ENCODE measurements at regions of chrX and their contacts with region 1.

Region 1: DNA sequence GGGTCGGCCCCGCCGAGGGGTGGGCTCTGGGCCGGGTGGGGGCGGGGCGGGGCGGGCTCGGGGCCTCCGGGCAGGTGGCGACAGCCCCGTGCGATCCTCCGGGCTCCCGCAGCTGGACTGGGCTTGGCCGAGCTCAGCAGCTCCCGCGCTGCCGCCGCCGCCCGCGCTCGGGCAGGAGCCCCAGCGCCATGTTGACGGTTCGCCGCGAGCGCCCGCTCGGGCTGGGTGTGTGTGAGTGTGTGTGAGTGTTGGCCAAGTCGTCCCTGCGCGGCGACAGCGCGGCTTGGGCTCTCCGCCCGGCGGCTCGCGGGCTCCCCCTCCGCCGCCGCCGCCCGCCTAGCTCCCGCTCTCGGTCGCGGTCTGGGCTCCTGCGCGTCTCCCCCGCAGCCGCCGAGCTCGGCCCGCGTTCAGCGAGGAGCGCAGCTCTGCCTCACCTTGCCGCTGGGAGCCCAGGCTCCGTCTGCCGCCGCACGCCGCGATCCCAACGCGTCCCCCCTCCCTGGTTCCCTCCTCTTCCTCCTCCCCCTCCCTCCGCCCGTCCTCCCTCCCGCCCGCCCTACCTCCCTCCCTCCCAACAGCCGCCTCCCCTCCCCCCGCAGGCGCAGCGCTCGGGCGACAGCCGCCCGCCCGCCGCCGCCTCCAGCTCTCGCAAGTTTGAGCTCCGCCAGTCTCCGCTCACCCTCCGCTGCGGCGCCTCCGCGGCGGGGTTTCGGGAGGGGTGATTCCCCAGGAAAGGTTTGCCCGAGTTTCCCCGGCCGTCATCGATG is at the start of gene BCOR:
- DNase-seq: peak; percentile 58 to 89 (median 72)
- ATAC-seq: peak; percentile 27
- H3K4me3 ChIP-seq: peak within 1 kb of the TSS; percentile 70
- H3K27ac ChIP-seq: peak within 1 kb of the TSS; percentile 92
- H3K4me1 ChIP-seq: peaks cover 39 to 71% of the 10 kb centered on the region in 2 experiments
- H3K27me3 ChIP-seq: no peaks in the 10 kb centered on the region
- CTCF ChIP-seq: no peak
- EP300 ChIP-seq: no peak
- POLR2A ChIP-seq: peak; percentile 73
- RAD21 ChIP-seq: no peak; a peak in 1 of 4 replicates
- polyA plus RNA-seq, gene BCOR: 32.0 to 37.4 TPM

Region 2: DNA sequence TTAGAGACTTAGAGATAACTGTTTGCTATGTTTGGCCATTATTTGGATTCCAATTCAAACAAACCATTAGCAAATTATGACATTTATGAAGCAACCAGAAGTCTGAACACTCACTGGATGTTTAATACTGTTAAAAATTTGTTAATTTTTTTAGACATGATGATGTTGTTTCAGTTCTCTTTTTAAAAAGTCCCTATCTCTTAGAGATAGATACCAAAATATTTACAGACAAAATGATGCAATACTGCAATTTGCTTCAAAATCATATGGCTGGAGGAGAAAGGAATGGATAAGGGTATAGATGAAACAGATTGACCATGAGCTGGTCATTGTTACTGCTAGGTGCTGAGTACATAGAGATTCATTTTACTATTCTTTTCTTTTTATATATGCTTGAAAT is 534.5 kb before region 1 on chrX:
- CTCF ChIA-PET with region 1: no interaction called
- POLR2A ChIA-PET with region 1: no interaction called
- in situ Hi-C with region 1: no loop called
- intact Hi-C with region 1: no loop called
- DNase-seq: no peak
- ATAC-seq: no peak
- H3K4me3 ChIP-seq: no peak overlapping the region
- H3K27ac ChIP-seq: no peak overlapping the region
- H3K4me1 ChIP-seq: no peaks in the 10 kb centered on the region
- H3K27me3 ChIP-seq: no peaks in the 10 kb centered on the region; a peak in 1 of 5 replicates
- CTCF ChIP-seq: no peak
- EP300 ChIP-seq: no peak
- POLR2A ChIP-seq: no peak
- RAD21 ChIP-seq: no peak

Region 3: GRCh38 chrX:39759526-39760184 is 338.0 kb before region 1 on chrX:
- CTCF ChIA-PET with region 1: no interaction called
- POLR2A ChIA-PET with region 1: no interaction called
- in situ Hi-C with region 1: no loop called
- intact Hi-C with region 1: no loop called
- DNase-seq: no peak
- ATAC-seq: no peak
- H3K4me3 ChIP-seq: no peak overlapping the region
- H3K27ac ChIP-seq: no peak overlapping the region
- H3K4me1 ChIP-seq: peaks cover 5 to 11% of the 10 kb centered on the region in 2 experiments; a peak in 4 of 5 replicates
- H3K27me3 ChIP-seq: no peaks in the 10 kb centered on the region; a peak in 1 of 5 replicates
- CTCF ChIP-seq: no peak
- EP300 ChIP-seq: no peak
- POLR2A ChIP-seq: no peak
- RAD21 ChIP-seq: no peak

Region 4: GRCh38 chrX:40013266-40014195 is 84.1 kb before region 1 on chrX:
- CTCF ChIA-PET with region 1: no interaction called
- POLR2A ChIA-PET with region 1: no interaction called
- in situ Hi-C with region 1: no loop called
- intact Hi-C with region 1: loop called (anchors 10 kb)
- DNase-seq: peak; percentile 66 to 81 (median 75)
- ATAC-seq: peak; percentile 77
- H3K4me3 ChIP-seq: peak overlapping the region; percentile 59
- H3K27ac ChIP-seq: peak overlapping the region; percentile 92
- H3K4me1 ChIP-seq: peaks cover 0 to 38% of the 10 kb centered on the region in 2 experiments; a peak in 3 of 5 replicates
- H3K27me3 ChIP-seq: no peaks in the 10 kb centered on the region
- CTCF ChIP-seq: peak in 1 of 3 experiments; percentile 13; a peak in 1 of 6 replicates
- EP300 ChIP-seq: no peak
- POLR2A ChIP-seq: peak; percentile 66
- RAD21 ChIP-seq: peak in 1 of 2 experiments; percentile 30; a peak in 1 of 4 replicates

Region 5: GRCh38 chrX:40040686-40041461 is 56.8 kb before region 1 on chrX:
- CTCF ChIA-PET with region 1: no interaction called
- POLR2A ChIA-PET with region 1: no interaction called
- in situ Hi-C with region 1: no loop called
- intact Hi-C with region 1: no loop called
- DNase-seq: peak in 1 of 4 experiments; percentile 30
- ATAC-seq: peak; percentile 72
- H3K4me3 ChIP-seq: no peak overlapping the region
- H3K27ac ChIP-seq: no peak overlapping the region
- H3K4me1 ChIP-seq: no peaks in the 10 kb centered on the region; a peak in 1 of 5 replicates
- H3K27me3 ChIP-seq: no peaks in the 10 kb centered on the region
- CTCF ChIP-seq: no peak
- EP300 ChIP-seq: no peak
- POLR2A ChIP-seq: no peak
- RAD21 ChIP-seq: no peak; a peak in 1 of 4 replicates

Region 6: DNA sequence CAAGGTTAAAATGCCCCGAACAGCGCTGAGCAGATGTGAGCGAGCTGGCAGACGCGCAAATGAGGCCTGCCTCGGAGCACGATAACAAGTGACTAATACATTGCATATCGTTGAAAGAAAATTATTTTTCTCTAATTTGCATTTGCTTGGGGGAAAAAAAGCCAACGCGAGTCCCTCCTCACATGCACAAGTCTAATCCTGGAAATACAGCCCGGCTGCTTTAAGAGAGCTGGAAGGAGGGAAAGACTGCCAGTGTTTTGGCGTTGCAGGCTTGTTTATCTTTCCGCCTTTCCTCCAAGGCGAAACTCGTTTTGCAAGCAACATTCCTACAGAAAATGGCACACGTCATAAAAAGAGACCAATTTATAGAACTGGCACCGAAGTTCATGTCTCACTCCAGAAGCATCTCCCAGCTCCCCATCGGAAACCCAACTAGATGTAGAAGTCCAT is 12.6 kb before region 1 on chrX:
- CTCF ChIA-PET with region 1: no interaction called
- POLR2A ChIA-PET with region 1: interaction called, 12 read pairs
- in situ Hi-C with region 1: no loop called
- intact Hi-C with region 1: no loop called
- DNase-seq: no peak
- ATAC-seq: no peak
- H3K4me3 ChIP-seq: no peak overlapping the region
- H3K27ac ChIP-seq: peak overlapping the region; percentile 52; the same call in 2 of the 3 replicates
- H3K4me1 ChIP-seq: peaks cover 58 to 67% of the 10 kb centered on the region in 2 experiments
- H3K27me3 ChIP-seq: no peaks in the 10 kb centered on the region
- CTCF ChIP-seq: no peak
- EP300 ChIP-seq: no peak
- POLR2A ChIP-seq: no peak
- RAD21 ChIP-seq: no peak

Measured in K562 (cell line).